Activated CD8-positive, alpha-beta T cell treated with anti-CD3 and anti-CD28 coated beads for 36 hours (primary cell): ENCODE measurements at regions of chr19 and their contacts with region 1.

Region 1: GRCh38 chr19:35882114-35882832 is 13.9 kb downstream of the APLP1 start:
- DNase-seq: peak; percentile 54
- ATAC-seq: peak; percentile 52
- H3K4me3 Mint-ChIP-seq: no peak overlapping the region
- H3K27ac Mint-ChIP-seq: no peak overlapping the region
- H3K4me1 Mint-ChIP-seq: peaks cover 5% of the 10 kb centered on the region
- H3K27me3 Mint-ChIP-seq: peaks cover 15% of the 10 kb centered on the region
- CTCF ChIP-seq: peak; percentile 72

Region 2: GRCh38 chr19:35860818-35861639 is 21.2 kb before region 1 on chr19:
- CTCF ChIA-PET with region 1: no interaction called
- POLR2A ChIA-PET with region 1: no interaction called
- intact Hi-C with region 1: no loop called
- DNase-seq: no peak
- ATAC-seq: no peak
- H3K4me3 Mint-ChIP-seq: no peak overlapping the region
- H3K27ac Mint-ChIP-seq: no peak overlapping the region
- H3K4me1 Mint-ChIP-seq: peaks cover 9% of the 10 kb centered on the region
- H3K27me3 Mint-ChIP-seq: peaks cover 45% of the 10 kb centered on the region
- CTCF ChIP-seq: no peak

Region 3: DNA sequence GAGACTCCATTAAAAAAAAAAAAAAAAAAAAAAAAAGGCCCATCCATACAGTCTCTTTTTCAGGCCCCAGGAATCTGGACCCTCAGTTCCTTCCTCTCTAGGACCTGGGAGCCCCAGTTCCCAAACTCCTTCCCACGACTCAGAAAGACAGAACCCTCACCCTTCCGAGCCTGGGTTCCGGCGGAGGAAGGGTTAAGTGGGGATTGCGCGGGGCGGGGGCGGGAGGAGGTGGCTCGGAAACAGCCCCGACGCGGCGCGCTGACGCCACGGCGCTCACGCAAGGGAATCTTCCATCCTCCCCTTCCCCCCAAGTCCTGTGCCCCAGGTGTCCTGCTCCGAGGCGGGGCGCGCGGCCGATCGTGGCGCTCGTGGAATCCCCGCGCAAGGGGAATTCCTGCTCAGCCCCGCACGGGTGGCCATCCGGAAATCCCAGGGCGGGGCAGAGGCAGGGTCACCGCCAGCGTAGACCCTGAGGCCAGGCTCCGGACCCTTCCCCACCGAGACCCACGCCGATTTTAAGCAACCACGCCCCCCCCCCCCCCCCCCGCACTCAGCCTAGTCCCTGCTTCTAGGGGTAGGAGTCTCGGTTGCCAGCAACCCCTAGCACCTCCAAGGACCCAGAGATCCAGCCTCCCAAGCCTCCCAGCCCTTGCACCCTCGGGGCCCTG is 17.4 kb after region 1 on chr19:
- CTCF ChIA-PET with region 1: interaction called, 3 read pairs
- POLR2A ChIA-PET with region 1: interaction called, 24 read pairs
- intact Hi-C with region 1: no loop called
- DNase-seq: peak; percentile 93
- ATAC-seq: peak; percentile 57
- H3K4me3 Mint-ChIP-seq: peak overlapping the region; percentile 86
- H3K27ac Mint-ChIP-seq: peak overlapping the region; percentile 95
- H3K4me1 Mint-ChIP-seq: peaks cover 49% of the 10 kb centered on the region
- H3K27me3 Mint-ChIP-seq: no peaks in the 10 kb centered on the region
- CTCF ChIP-seq: no peak